Right cardiac atrium (tissue), 5 donors: ENCODE measurements at regions of chr6 and their contacts with region 1.

Region 1: DNA sequence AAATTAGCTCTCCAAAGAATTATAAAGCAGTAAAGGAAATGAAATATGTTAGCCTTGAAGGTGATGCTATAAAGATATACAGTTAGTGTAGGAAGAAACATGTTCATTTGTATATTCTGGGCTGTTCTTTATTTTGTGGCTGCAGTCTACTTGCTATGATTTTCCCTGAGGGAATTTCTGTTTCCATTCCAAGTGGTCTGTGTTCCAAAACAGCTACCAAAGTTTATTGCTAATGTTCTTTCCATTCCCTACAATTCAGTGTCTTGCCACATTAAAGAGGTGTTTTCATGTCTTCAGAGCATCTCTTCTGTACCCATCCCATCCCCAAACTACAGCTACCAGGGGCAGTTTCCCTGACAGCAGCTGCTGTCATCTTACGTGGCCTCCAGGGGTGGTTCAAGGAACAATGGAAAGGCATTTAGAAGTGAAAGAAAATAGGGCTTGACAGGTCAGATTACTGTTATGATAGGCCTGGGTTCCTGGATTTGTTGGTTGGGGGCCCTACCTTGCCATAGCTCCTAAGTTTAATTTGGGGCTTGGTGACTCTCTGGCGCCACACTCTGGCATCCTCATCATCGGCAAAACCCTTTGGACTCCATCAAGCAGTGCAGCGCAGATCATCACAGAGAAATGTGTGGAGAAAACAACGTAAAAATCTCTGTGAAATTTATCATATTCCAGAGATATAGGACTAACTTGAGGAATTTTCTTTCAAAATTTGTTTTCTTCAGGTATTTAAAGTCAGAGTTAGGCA is 33.8 kb upstream of the AIG1 start:
- DNase-seq: peak; percentile 22 to 65 (median 62)
- ATAC-seq: peak in 1 of 2 donors; percentile 73
- H3K4me3 ChIP-seq: no peak overlapping the region
- H3K27ac ChIP-seq: no peak overlapping the region
- H3K4me1 ChIP-seq: peaks cover 1% of the 10 kb centered on the region
- H3K27me3 ChIP-seq: no peaks in the 10 kb centered on the region

Region 2: DNA sequence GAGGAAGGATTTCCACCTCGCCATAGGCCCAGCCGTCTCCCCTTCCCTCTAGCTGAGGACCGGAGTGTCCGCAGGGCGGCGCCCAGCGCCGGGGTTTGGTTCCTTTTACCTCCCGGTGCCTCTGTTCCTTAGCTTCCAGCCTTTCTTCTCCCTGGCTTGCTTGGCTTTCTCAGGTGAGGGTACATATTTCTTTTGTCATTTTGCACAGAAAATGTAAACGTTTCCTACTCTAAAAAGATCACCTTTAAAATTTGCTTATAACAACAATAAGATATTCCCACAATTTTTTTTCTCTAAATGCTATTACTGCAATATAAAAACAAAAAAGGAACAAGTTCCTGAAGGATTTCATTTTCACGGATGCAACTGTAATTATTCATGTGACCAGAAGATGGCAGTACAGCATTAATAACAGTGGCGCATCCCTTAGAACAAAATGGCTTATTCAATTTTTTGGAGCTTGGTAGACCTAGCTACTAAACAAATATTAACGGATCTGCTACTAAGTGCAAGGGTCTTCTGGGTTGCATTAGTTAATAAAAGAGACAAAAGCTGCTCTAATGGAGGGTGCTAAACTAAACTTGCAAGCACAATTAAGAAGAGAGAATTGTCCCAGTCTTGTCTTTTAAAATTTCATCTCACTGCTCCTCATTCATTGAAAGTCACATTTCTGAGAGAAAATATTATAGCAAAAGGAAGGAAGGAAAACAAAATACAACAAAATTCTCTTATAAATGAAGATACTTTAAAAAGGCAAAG is 552.2 kb before region 1 on chr6:
- intact Hi-C with region 1: loop called in 2 of 4 experiments (anchors 10 kb)
- DNase-seq: peak in 1 of 3 donors; percentile 36
- ATAC-seq: peak in 1 of 2 donors; percentile 37
- H3K4me3 ChIP-seq: no peak overlapping the region
- H3K27ac ChIP-seq: no peak overlapping the region
- H3K4me1 ChIP-seq: no peaks in the 10 kb centered on the region
- H3K27me3 ChIP-seq: no peaks in the 10 kb centered on the region

Region 3: GRCh38 chr6:142692942-142693341 is 333.9 kb before region 1 on chr6:
- intact Hi-C with region 1: loop called (anchors 2 to 5 kb)
- DNase-seq: peak; percentile 61 to 70 (median 61)
- ATAC-seq: peak; percentile 69 to 85
- H3K4me3 ChIP-seq: no peak overlapping the region
- H3K27ac ChIP-seq: no peak overlapping the region
- H3K4me1 ChIP-seq: no peaks in the 10 kb centered on the region
- H3K27me3 ChIP-seq: no peaks in the 10 kb centered on the region

Region 4: GRCh38 chr6:142746524-142746923 is 280.3 kb before region 1 on chr6:
- intact Hi-C with region 1: loop called in 1 of 4 experiments (anchors 5 kb)
- DNase-seq: peak in 2 of 3 donors; percentile 20 to 40
- ATAC-seq: peak; percentile 47 to 55
- H3K4me3 ChIP-seq: no peak overlapping the region
- H3K27ac ChIP-seq: no peak overlapping the region
- H3K4me1 ChIP-seq: no peaks in the 10 kb centered on the region
- H3K27me3 ChIP-seq: no peaks in the 10 kb centered on the region

Region 5: DNA sequence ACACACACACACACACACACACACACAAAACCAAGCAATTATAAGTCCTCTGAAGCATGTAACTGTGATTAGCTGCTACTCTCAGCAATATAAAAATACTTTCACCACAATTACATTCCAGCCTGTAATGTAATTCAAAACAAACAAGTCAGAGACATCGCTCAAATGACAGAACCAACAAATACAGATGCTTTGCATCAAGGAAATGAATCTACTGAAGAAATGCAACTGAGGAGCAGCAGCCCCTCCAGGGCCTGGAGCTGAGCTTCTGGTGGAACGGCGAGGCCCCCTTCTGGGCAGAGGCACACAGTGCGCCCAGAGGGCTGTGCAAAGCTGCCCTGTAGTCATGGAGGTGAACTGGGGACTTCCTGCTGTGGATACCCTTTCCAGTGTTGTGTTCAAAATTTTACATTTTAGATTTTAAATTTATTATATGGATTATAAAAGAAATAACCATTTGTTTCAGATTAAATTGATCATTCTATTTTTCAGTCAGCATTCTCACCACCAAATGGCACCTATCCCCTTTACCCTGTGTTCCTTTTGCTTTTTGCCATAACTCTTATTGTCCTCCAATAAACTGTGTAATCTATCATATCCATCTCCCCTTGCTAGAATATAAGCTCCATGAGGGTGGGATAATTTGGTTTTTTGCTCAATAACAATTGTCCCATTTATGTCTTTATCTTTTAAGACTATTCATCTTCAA is 400.4 kb after region 1 on chr6:
- intact Hi-C with region 1: loop called in 1 of 4 experiments (anchors 10 kb)
- DNase-seq: peak; percentile 60 to 89 (median 88)
- ATAC-seq: peak; percentile 96
- H3K4me3 ChIP-seq: no peak overlapping the region
- H3K27ac ChIP-seq: no peak overlapping the region
- H3K4me1 ChIP-seq: no peaks in the 10 kb centered on the region
- H3K27me3 ChIP-seq: no peaks in the 10 kb centered on the region